Thyroid gland (tissue), 4 donors: ENCODE measurements at regions of chr10 and their contacts with region 1.

Region 1: DNA sequence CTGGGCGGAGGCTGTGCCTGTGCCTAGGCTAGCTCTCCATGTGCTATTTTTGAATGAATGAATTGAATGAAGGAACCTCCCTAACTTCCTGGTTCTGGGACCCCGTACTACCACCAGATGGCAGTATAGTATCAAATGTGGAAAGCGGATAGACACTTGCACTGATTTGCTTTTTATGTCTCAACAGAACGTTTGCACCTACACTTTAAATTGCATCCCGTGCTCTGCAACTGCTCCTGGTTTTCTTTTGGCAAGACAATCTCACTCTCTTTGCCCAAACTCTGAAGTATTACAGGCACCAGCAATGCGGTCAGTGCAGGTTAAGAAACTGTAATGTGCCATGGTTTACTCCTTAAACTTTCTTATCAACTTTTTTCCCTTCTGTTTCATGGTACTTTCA is 6.5 kb downstream of the FZD8 start:
- DNase-seq: peak; percentile 27 to 38
- H3K4me3 ChIP-seq: no peak overlapping the region
- H3K27ac ChIP-seq: no peak overlapping the region
- H3K4me1 ChIP-seq: peaks cover 20 to 37% of the 10 kb centered on the region in 2 donors
- H3K27me3 ChIP-seq: no peaks in the 10 kb centered on the region
- CTCF ChIP-seq: peak; percentile 66 to 93 (median 87)
- POLR2A ChIP-seq: no peak

Region 2: GRCh38 chr10:35005868-35006267 is 629.7 kb before region 1 on chr10:
- intact Hi-C with region 1: no loop called
- DNase-seq: no peak
- H3K4me3 ChIP-seq: no peak overlapping the region
- H3K27ac ChIP-seq: no peak overlapping the region
- H3K4me1 ChIP-seq: no peaks in the 10 kb centered on the region
- H3K27me3 ChIP-seq: no peaks in the 10 kb centered on the region
- CTCF ChIP-seq: no peak
- POLR2A ChIP-seq: no peak

Region 3: DNA sequence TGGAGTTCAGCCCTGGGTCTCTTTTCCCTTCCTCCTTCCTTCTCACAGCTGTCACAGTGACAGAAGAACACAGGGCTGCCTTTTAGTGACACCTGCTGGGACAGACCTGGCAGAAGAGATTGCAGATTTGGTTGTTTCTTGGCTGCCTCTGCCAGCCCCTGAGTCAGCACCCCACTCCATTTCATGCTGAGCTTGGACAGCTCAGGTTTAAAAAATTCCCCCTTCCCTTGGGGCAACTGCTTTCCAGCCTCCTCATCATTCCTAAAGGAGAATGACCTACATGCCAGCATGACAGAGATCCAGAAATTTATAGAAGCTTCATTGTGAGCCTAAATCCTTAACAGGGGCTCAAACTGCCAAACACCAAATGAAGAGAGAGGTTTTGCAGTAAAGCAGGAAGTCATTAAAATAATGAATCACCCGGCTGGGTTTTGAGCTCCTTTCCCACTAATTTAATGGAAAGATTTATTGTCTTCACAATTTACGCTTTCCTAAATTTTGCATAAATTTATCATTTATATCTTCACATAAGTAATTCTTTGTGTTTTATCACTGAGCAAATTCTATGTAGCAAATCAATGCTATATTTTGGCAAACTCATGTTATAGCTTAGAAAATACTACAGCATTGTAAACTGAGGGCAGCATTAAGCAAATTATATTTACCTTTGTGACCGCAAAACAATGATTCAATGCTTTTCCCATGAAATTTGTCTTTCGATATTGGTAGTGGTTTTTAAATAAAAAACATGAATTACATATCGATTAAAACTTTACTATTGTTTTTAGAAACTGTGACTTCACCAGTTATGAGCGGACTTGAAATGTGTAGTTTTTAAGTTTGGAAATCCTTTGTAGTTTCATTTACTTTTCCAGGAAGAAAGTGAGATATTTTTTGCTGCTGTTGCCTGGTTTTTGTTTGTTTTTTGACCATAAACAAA is 1090.3 kb after region 1 on chr10:
- intact Hi-C with region 1: loop called (anchors 10 kb)
- DNase-seq: peak; percentile 69 to 83
- H3K4me3 ChIP-seq: no peak overlapping the region
- H3K27ac ChIP-seq: no peak overlapping the region
- H3K4me1 ChIP-seq: peaks cover 12 to 13% of the 10 kb centered on the region in 2 donors
- H3K27me3 ChIP-seq: no peaks in the 10 kb centered on the region
- CTCF ChIP-seq: peak in 5 of 6 experiments; percentile 17 to 65 (median 61)
- POLR2A ChIP-seq: no peak

Region 4: GRCh38 chr10:36780158-36780557 is 1144.6 kb after region 1 on chr10:
- intact Hi-C with region 1: loop called (anchors 5 kb)
- DNase-seq: no peak
- H3K4me3 ChIP-seq: no peak overlapping the region
- H3K27ac ChIP-seq: no peak overlapping the region
- H3K4me1 ChIP-seq: no peaks in the 10 kb centered on the region
- H3K27me3 ChIP-seq: no peaks in the 10 kb centered on the region
- CTCF ChIP-seq: no peak
- POLR2A ChIP-seq: no peak

Region 5: DNA sequence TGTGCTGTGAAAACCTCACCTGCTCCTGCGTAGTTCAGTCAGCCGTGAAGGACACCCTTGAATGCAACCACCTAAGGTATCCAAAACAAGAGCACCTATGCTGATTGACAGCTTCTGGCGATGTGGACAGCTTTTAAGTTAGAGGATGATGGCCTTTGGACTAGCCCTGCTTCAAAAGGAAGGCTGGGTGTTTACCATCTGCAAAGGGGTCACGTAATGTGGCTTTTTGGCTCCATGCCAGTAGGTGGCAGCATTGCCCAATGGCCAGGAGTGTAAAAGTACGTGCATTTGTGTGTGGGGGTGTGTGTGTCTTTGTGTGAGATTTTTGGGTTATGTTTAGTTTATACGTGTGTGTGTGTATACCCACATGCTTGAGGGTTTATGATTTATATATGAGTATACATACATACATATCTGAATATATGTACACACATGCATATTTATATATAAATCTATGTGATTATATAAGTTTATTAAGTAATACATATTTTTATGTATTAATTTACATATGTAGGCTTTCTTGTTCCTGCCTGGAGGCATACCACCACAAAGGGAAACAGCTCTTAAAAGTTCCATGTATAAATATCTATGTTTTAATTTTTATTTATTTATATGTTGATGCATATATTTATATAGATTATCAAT is 1253.5 kb after region 1 on chr10:
- intact Hi-C with region 1: loop called (anchors 10 kb)
- DNase-seq: peak; percentile 49 to 57
- H3K4me3 ChIP-seq: no peak overlapping the region
- H3K27ac ChIP-seq: no peak overlapping the region
- H3K4me1 ChIP-seq: peaks cover 7 to 15% of the 10 kb centered on the region in 2 donors
- H3K27me3 ChIP-seq: no peaks in the 10 kb centered on the region
- CTCF ChIP-seq: peak in 1 of 6 experiments; percentile 31
- POLR2A ChIP-seq: no peak